ENCODE measurements at regions of chr3 and their contacts with region 1.

Region 1: GRCh38 chr3:93843981-93844380 is 129.7 kb downstream of the PROS1 start:
- DNase-seq: peak; percentile 86
- H3K4me3 Mint-ChIP-seq: no peak overlapping the region
- H3K27ac Mint-ChIP-seq: peak overlapping the region; percentile 90
- H3K4me1 Mint-ChIP-seq: peaks cover 12% of the 10 kb centered on the region
- H3K27me3 Mint-ChIP-seq: no peaks in the 10 kb centered on the region
- CTCF ChIP-seq: no peak

Region 2: GRCh38 chr3:93906245-93906644 is 62.3 kb after region 1 on chr3:
- CTCF ChIA-PET with region 1: no interaction called
- POLR2A ChIA-PET with region 1: no interaction called
- intact Hi-C with region 1: no loop called
- DNase-seq: no peak
- H3K4me3 Mint-ChIP-seq: no peak overlapping the region
- H3K27ac Mint-ChIP-seq: no peak overlapping the region
- H3K4me1 Mint-ChIP-seq: peaks cover 13% of the 10 kb centered on the region
- H3K27me3 Mint-ChIP-seq: no peaks in the 10 kb centered on the region
- CTCF ChIP-seq: no peak

Region 3: GRCh38 chr3:93931597-93932229 is 87.7 kb after region 1 on chr3:
- CTCF ChIA-PET with region 1: no interaction called
- POLR2A ChIA-PET with region 1: no interaction called
- intact Hi-C with region 1: no loop called
- DNase-seq: no peak
- H3K4me3 Mint-ChIP-seq: no peak overlapping the region
- H3K27ac Mint-ChIP-seq: no peak overlapping the region
- H3K4me1 Mint-ChIP-seq: peaks cover 6% of the 10 kb centered on the region
- H3K27me3 Mint-ChIP-seq: no peaks in the 10 kb centered on the region
- CTCF ChIP-seq: no peak

Region 4: GRCh38 chr3:93979833-93980676 is 136.1 kb after region 1 on chr3 and contains the start of gene ARL13B:
- CTCF ChIA-PET with region 1: no interaction called
- POLR2A ChIA-PET with region 1: interaction called, 3 read pairs
- intact Hi-C with region 1: loop called (anchors 10 kb)
- DNase-seq: peak; percentile 99
- H3K4me3 Mint-ChIP-seq: peak within 1 kb of the TSS; percentile 83
- H3K27ac Mint-ChIP-seq: peak within 1 kb of the TSS; percentile 98
- H3K4me1 Mint-ChIP-seq: peaks cover 10% of the 10 kb centered on the region
- H3K27me3 Mint-ChIP-seq: no peaks in the 10 kb centered on the region
- CTCF ChIP-seq: no peak
- total RNA-seq, gene ARL13B: 22.0 and 26.0 TPM in 2 replicates

Region 5: DNA sequence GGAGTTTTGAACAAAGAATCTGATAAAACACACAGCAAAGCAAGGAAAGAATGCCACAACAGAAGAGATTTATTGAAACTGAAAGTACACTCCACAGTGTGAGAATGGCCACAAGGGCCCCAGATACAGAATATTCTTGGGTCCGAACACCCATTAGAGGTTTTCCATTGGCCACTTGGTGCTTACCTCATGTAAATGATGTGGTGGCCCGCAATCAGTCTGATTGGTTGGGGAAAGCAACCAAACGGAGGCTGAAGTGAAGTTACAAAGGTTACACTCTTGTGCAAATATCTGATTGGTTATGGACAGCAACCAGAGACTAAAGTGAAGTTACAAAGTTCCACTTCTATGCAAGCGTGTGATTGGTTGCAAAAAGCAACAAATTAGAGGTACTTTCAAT is 239.3 kb after region 1 on chr3:
- CTCF ChIA-PET with region 1: no interaction called
- POLR2A ChIA-PET with region 1: no interaction called
- intact Hi-C with region 1: no loop called
- DNase-seq: no peak
- H3K4me3 Mint-ChIP-seq: no peak overlapping the region
- H3K27ac Mint-ChIP-seq: no peak overlapping the region
- H3K4me1 Mint-ChIP-seq: no peaks in the 10 kb centered on the region
- H3K27me3 Mint-ChIP-seq: no peaks in the 10 kb centered on the region
- CTCF ChIP-seq: no peak

Measured in MCF 10A (cell line).